Posterior cingulate gyrus (tissue), 11 donors: ENCODE measurements at regions of chr4 and their contacts with region 1.

Region 1: DNA sequence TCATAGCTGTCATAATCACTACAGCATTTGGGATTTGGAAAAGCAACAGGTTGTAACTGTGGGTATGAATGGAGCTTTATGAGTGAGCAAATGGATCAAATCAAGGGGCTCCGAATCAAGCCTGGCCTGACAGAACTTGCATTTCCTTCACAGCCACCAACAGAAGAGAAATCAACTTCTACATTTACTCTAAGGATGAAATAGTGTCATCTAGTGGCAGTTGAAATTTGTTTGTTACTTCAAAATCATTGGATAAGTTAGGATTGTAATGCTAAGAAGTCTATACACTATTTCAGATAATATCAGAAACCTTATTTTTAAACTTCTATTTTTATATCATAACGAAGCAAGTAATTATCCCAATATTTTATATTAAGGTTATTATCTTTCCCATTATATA is 10.7 kb upstream of the WDR17 start:
- DNase-seq: no peak

Region 2: DNA sequence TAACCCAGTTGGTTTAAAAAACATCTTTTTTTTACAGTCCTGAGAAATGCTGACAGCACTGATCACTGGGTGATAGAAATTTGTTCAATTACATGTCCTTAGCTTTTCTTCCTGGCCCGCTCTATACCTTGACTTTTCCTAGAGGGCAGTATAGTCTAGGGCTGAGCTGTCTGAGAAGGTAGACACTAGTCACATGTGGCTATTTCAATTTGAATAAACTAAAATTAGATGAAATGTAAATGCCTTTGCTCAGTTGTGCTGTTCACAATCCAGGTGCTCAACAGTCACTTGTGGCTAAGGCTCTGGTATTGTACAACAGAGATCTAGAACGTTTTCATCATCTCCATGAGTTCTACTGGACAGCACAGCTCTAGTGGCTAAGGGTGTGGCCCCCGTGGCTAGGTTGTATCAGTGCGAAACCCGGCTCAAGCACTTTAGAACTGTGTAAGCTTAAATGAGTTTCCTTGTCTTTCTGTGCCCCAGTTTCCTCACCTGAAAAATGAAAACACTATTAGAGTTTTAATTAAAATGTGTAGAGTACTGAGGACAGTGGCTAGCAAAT is 100.9 kb before region 1 on chr4:
- intact Hi-C with region 1: loop called (anchors 10 kb)
- DNase-seq: no peak

Region 3: GRCh38 chr4:176238157-176238610 is 183.2 kb after region 1 on chr4:
- intact Hi-C with region 1: no loop called
- DNase-seq: no peak